Heart left ventricle (tissue), 16 donors: ENCODE measurements at regions of chr1 and their contacts with region 1.

Region 1: GRCh38 chr1:35451125-35451528 is 106.1 kb downstream of the KIAA0319L start:
- DNase-seq: peak; percentile 78 to 89 (median 83)
- ATAC-seq: peak; percentile 80 to 91 (median 86)
- H3K4me3 ChIP-seq: no peak overlapping the region
- H3K27ac ChIP-seq: peak overlapping the region in 4 of 12 donors; percentile 17 to 63 (median 50)
- H3K4me1 ChIP-seq: peaks cover 2 to 90% (median 29%) of the 10 kb centered on the region in 12 donors
- H3K27me3 ChIP-seq: no peaks in the 10 kb centered on the region
- CTCF ChIP-seq: peak; percentile 72 to 94 (median 82)
- POLR2A ChIP-seq: no peak

Region 2: DNA sequence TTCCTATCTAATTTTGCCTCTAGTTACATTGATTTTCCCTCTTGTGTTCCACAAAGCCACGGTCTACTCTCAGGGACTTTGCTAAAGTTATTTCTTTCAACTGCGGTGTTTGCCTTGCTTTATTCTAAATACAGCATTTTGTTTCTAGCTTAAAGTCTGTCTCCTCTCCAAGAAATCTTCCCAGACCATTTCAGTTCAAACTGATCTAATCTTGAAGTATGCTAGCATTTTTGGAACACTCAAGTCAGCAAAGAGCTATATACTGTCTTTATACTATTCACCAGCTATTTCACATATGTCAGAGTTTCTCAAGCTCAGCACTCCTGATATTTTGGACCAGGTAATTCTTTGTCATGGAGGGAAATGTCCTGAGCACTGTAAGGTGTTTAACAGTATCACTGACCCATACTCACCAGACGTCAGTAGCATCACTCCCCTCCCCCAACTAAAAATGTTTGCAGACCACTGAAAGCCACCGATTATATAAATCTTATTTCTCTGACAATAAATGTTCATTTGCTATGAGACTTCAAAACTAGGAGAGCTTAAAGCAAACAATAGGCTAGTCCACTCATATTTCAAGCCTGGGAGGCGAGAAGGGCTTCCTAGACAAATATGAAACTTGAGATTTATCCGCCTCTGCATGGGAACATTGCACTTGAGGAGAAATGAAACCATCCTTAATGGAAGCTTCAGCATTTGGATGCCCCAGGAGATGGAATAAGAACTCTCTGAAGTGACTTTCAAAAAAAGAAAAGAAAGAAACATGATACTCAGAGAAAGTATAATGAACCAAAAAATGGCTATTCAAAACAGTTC is 24.9 kb after region 1 on chr1:
- intact Hi-C with region 1: no loop called
- DNase-seq: no peak
- ATAC-seq: no peak
- H3K4me3 ChIP-seq: no peak overlapping the region
- H3K27ac ChIP-seq: no peak overlapping the region
- H3K4me1 ChIP-seq: peaks cover 0 to 7% (median 0%) of the 10 kb centered on the region in 12 donors
- H3K27me3 ChIP-seq: no peaks in the 10 kb centered on the region
- CTCF ChIP-seq: no peak
- POLR2A ChIP-seq: no peak

Region 3: GRCh38 chr1:35544978-35545377 is 93.9 kb after region 1 on chr1:
- intact Hi-C with region 1: loop called in 6 of 10 experiments (anchors 2 to 5 kb)
- DNase-seq: peak in 3 of 5 donors; percentile 63 to 79 (median 71)
- ATAC-seq: peak; percentile 70 to 92 (median 88)
- H3K4me3 ChIP-seq: no peak overlapping the region
- H3K27ac ChIP-seq: peak overlapping the region in 6 of 12 donors; percentile 10 to 56 (median 44)
- H3K4me1 ChIP-seq: peaks cover 2 to 55% (median 43%) of the 10 kb centered on the region in 12 donors
- H3K27me3 ChIP-seq: no peaks in the 10 kb centered on the region
- CTCF ChIP-seq: peak in 11 of 12 donors; percentile 15 to 60 (median 38)
- POLR2A ChIP-seq: no peak

Region 4: DNA sequence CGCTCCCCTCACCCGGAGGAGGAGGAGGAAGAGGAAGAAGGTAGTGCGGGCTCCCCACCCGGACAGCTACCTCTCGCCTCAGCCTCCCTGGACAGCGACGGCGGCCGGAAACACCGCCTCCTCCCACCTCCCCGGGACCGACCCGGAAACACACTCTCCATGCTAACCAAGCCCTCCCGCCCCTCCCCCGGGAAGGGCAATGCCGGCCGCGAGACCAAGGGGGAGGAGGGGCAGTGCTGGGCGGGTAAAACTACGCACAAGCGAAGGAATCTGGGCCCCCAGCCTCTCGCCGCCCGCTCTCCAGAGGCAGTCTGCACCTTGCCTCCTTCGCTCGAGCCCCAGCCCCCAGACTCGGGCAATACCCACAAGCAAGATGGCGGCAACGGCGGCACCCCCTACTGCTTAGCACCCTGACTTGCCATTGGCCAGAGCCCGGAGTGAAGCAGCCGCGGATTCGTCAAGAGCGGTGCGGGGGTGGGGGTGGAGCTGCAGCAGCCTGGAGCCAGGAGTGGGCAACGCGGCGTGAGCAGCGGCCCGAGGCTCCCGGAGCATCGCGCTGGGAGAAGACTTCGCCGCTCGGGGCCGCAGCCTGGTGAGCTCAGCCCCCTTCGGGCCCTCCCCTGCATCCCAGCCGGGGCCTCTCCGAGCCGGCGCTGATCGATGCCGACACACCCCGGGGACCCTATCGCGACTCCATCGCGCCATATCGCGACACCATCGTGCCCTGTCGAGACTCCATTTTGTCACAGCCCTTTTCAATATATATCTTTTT is 106.4 kb after region 1 on chr1 and contains the starts of genes KIAA0319L and NCDN:
- intact Hi-C with region 1: loop called in 5 of 10 experiments (anchors 2 to 5 kb)
- DNase-seq: peak; percentile 97 to 98 (median 98)
- ATAC-seq: peak; percentile 94 to 97 (median 96)
- H3K4me3 ChIP-seq: peak within 1 kb of the TSS; percentile 69 to 98 (median 92)
- H3K27ac ChIP-seq: peak within 1 kb of the TSS; percentile 90 to 99 (median 98)
- H3K4me1 ChIP-seq: peaks cover 0 to 75% (median 49%) of the 10 kb centered on the region in 12 donors
- H3K27me3 ChIP-seq: no peaks in the 10 kb centered on the region
- CTCF ChIP-seq: no peak
- POLR2A ChIP-seq: peak in 1 of 2 donors; percentile 65
- total RNA-seq, gene KIAA0319L: 58.3 to 108 (median 78.3) TPM
- total RNA-seq, gene NCDN: 20.7 to 44.4 (median 35.3) TPM

Region 5: DNA sequence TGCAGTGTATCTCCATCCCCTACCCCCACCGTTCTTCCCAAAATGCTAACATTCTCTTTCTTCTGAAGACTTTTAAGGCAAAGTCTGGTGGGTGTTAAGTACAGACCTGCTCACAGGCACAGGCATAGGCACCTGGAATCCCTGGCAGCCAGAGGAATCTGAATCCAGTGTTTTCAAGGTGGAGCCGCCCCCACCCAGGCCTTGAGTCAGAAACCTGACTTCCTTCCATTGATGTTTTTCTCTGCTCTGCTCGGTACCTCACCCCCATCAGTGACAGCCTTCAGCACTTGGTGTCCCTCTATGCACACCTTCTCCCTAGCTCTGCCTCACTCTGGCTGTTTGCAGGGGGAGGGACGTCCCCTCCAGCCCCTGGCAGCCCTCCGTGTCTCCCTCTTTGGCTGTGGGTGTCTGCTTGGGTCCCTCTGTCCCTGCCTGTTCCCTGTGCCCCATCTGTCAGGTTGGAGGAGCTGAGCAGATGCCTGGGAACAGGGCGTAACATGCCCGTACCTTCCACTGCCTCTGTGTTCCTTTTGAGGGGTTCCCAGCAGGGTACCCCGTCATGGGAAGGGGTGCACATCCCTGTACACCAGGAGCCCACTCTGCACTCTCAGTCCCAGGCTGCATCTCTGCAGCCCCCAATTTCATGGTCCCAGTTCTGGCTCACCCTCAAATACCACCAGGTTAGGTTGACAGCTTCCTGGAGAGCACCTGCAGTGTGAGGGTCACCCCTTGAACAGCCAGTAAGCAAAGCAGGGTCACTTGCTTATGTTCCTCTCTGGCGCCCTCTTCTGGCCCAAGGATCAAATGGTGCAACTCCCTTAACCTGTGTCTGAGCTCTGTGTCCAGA is 113.1 kb after region 1 on chr1:
- intact Hi-C with region 1: loop called (anchors 1 to 5 kb)
- DNase-seq: peak; percentile 72 to 87 (median 78)
- ATAC-seq: peak in 3 of 4 donors; percentile 29 to 49 (median 43)
- H3K4me3 ChIP-seq: no peak overlapping the region
- H3K27ac ChIP-seq: no peak overlapping the region
- H3K4me1 ChIP-seq: peaks cover 0 to 28% (median 11%) of the 10 kb centered on the region in 12 donors
- H3K27me3 ChIP-seq: peaks cover 0 to 1% (median 0%) of the 10 kb centered on the region in 9 donors
- CTCF ChIP-seq: peak; percentile 59 to 85 (median 78)
- POLR2A ChIP-seq: no peak

Region 6: DNA sequence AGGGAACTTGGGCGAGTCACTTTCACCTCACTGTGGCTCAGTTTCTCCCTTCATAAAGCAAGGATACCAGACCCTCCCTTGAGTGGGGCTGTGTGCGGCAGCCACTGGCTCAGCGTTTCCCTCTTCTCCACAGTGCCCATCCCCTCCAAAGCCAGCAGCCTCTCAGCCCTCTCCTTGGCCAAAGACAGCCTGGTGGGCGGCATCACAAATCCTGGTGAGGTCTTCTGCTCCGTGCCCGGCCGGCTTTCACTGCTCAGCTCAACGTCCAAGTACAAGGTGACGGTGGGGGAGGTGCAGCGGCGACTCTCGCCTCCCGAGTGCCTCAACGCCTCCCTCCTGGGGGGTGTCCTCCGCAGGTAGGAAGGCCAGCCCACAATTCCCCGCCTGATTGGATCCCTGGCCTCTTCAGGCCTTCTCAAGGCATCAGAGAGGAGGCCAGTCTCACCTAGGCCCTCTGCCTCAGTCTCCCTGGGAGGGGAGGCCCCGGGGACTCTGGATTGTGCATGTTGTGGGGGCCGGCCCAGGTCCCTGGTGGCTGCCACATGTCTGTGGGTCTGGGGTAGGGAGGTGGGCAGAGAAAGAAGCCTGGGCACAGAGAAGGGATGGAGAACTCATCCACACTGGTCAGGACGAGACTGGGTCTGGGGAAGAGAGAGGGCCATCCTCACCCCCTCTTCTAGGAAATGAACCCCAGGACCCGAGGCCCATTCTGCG is 137.2 kb after region 1 on chr1:
- intact Hi-C with region 1: no loop called
- DNase-seq: no peak
- ATAC-seq: no peak
- H3K4me3 ChIP-seq: no peak overlapping the region
- H3K27ac ChIP-seq: no peak overlapping the region
- H3K4me1 ChIP-seq: no peaks in the 10 kb centered on the region
- H3K27me3 ChIP-seq: no peaks in the 10 kb centered on the region
- CTCF ChIP-seq: no peak
- POLR2A ChIP-seq: no peak

Region 7: GRCh38 chr1:35641233-35641866 is 190.2 kb after region 1 on chr1 and contains the start of gene PSMB2:
- intact Hi-C with region 1: no loop called
- DNase-seq: peak; percentile 94 to 97 (median 95)
- ATAC-seq: peak; percentile 96 to 98 (median 98)
- H3K4me3 ChIP-seq: peak within 1 kb of the TSS; percentile 69 to 96 (median 82)
- H3K27ac ChIP-seq: peak within 1 kb of the TSS; percentile 69 to 95 (median 88)
- H3K4me1 ChIP-seq: peaks cover 0 to 50% (median 39%) of the 10 kb centered on the region in 12 donors
- H3K27me3 ChIP-seq: peaks cover 0 to 16% (median 0%) of the 10 kb centered on the region in 9 donors
- CTCF ChIP-seq: peak in 1 of 12 donors; percentile 8
- POLR2A ChIP-seq: peak in 1 of 2 donors; percentile 61
- total RNA-seq, gene PSMB2: 36.3 to 60.0 (median 41.7) TPM

Region 8: DNA sequence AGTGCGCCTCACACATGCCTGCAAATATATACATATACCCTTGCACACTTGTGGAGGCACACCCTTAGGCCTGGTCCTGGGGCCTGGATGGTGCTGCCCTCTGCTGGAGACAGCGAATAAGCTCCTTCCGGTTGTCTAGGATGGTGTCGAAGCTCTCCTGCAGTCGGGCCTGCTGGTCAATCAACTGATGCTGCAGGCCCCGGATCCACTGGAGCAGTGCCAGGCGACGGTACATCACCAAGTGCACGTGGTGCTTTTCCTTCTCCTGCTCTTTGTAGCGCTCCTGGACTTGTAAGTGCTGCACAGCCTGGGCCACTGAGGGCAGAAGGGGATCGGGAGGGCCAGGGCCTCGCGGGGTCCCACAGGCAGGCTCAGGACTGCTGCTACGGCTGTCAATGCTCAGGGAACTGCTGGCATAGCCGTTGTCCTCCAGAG is 264.5 kb after region 1 on chr1:
- intact Hi-C with region 1: loop called in 3 of 10 experiments (anchors 5 to 10 kb)
- DNase-seq: peak; percentile 61 to 77 (median 70)
- ATAC-seq: peak; percentile 46 to 64 (median 58)
- H3K4me3 ChIP-seq: peak overlapping the region in 3 of 12 donors; percentile 7 to 19 (median 12)
- H3K27ac ChIP-seq: no peak overlapping the region
- H3K4me1 ChIP-seq: peaks cover 0 to 38% (median 19%) of the 10 kb centered on the region in 12 donors
- H3K27me3 ChIP-seq: no peaks in the 10 kb centered on the region
- CTCF ChIP-seq: peak; percentile 64 to 91 (median 80)
- POLR2A ChIP-seq: no peak

Region 9: DNA sequence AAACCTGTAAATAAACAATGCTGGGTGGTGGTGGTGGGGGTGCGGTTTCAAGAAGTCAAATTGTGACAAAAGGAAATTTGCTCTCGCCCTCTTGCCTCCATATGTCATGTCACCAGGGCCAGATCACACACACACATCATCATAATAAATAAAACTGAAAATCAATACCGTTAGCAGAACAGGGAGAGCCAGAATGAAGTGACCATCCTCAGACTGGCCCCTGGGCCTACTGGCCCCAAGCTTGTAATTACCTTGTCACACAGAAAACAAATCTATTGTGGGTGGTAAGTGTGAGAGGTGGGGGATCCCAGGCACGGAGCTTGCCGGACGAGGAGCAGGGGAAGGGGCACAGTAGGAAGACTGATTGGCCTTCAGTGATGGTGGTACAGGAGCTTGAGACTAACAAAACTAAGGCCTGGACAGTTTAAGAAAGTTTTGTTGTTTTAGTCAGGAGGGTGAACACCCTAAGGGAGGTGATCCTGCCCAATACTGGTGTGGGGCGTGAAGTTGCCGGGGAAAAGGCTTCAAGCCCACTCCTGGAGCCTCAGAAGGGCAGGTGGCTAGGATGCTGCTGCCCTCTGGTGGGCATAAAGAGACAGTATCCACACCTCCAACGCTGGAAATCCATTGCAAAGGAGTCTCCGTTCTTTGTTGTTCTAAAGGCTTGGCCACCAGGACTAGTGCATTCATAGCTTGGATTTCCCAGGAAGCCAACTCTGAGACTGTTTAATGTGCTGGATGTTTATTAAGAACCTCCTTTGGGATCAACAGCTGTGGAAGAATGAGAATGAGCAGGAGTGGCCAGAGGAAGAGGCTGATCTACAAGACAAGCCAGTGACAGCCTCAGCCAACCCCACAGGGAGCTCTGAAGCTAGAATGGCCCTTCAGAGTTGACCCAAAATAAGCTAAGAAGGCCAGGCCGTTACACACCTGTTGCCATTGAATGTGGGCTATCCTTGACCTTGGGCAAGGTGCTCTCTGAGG is 275.6 kb after region 1 on chr1:
- intact Hi-C with region 1: loop called in 8 of 10 experiments (anchors 5 to 10 kb)
- DNase-seq: peak in 4 of 5 donors; percentile 36 to 56 (median 40)
- ATAC-seq: peak; percentile 77 to 92 (median 87)
- H3K4me3 ChIP-seq: no peak overlapping the region
- H3K27ac ChIP-seq: no peak overlapping the region
- H3K4me1 ChIP-seq: peaks cover 0 to 3% (median 0%) of the 10 kb centered on the region in 12 donors
- H3K27me3 ChIP-seq: no peaks in the 10 kb centered on the region
- CTCF ChIP-seq: peak; percentile 79 to 95 (median 85)
- POLR2A ChIP-seq: no peak